CD8-positive, alpha-beta T cell (primary cell): ENCODE measurements at regions of chrX and their contacts with region 1.

Region 1: DNA sequence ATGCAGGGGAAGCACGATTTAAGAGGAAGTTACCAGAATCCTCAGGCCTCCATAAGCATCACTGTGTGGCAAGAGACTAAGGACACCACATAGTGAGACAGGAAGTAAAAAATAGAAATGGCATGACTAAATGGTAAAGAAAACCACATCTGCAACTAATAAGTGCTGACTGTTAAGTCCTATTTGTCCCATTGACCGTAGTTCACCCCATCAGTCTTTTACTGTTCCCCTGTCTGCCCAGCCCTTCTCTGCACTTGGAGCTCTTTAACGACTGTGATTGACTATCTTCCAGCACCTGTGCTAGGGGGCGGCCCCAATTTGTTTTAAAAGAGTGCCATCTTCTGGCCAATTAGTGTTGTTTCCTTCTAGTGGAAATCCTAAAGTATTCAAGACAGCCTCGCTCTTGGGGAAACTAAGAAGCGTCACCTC is 94.2 kb downstream of the MAOA start:
- DNase-seq: peak in 8 of 9 experiments; percentile 3 to 67 (median 43)
- ATAC-seq: peak; percentile 68
- H3K4me3 ChIP-seq: no peak overlapping the region
- H3K4me3 Mint-ChIP-seq: no peak overlapping the region
- H3K27ac ChIP-seq: no peak overlapping the region
- H3K27ac Mint-ChIP-seq: no peak overlapping the region
- H3K4me1 ChIP-seq: no peaks in the 10 kb centered on the region
- H3K4me1 Mint-ChIP-seq: peaks cover 4% of the 10 kb centered on the region
- H3K27me3 ChIP-seq: no peaks in the 10 kb centered on the region
- H3K27me3 Mint-ChIP-seq: no peaks in the 10 kb centered on the region
- CTCF ChIP-seq: peak; percentile 28

Region 2: DNA sequence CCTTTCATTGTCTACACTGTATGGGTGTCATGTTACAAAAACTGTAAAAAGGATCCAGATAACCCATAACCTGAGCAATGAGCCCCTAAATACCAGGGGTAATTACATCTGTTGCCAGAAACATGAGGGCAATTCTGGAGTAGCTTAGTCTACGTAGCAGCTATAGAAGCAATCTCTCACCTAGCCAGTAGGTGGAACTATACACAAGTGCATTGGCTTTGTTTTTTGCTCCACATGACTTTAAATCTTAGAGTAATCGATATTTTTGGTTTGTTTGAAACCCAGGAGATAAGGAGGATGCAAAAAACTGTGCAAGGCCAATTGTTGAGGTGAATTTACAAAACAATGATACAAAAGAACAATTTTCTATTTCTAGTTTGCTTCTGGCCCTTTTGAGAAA is 1968.8 kb before region 1 on chrX:
- CTCF ChIA-PET with region 1: interaction called, 3 read pairs
- POLR2A ChIA-PET with region 1: no interaction called
- intact Hi-C with region 1: loop called (anchors 1 to 2 kb)
- DNase-seq: peak in 3 of 9 experiments; percentile 6 to 63 (median 51)
- ATAC-seq: peak; percentile 54
- H3K4me3 ChIP-seq: no peak overlapping the region
- H3K4me3 Mint-ChIP-seq: no peak overlapping the region
- H3K27ac ChIP-seq: no peak overlapping the region
- H3K27ac Mint-ChIP-seq: no peak overlapping the region
- H3K4me1 ChIP-seq: no peaks in the 10 kb centered on the region
- H3K4me1 Mint-ChIP-seq: peaks cover 15% of the 10 kb centered on the region
- H3K27me3 ChIP-seq: no peaks in the 10 kb centered on the region
- H3K27me3 Mint-ChIP-seq: no peaks in the 10 kb centered on the region
- CTCF ChIP-seq: peak; percentile 68

Region 3: GRCh38 chrX:41796577-41796976 is 1953.7 kb before region 1 on chrX:
- CTCF ChIA-PET with region 1: interaction called, 4 read pairs
- POLR2A ChIA-PET with region 1: no interaction called
- intact Hi-C with region 1: loop called (anchors 2 to 5 kb)
- DNase-seq: peak in 2 of 9 experiments; percentile 8
- ATAC-seq: no peak
- H3K4me3 ChIP-seq: no peak overlapping the region
- H3K4me3 Mint-ChIP-seq: no peak overlapping the region
- H3K27ac ChIP-seq: no peak overlapping the region
- H3K27ac Mint-ChIP-seq: peak overlapping the region; percentile 56
- H3K4me1 ChIP-seq: peaks cover 13% of the 10 kb centered on the region
- H3K4me1 Mint-ChIP-seq: peaks cover 37% of the 10 kb centered on the region
- H3K27me3 ChIP-seq: no peaks in the 10 kb centered on the region
- H3K27me3 Mint-ChIP-seq: no peaks in the 10 kb centered on the region
- CTCF ChIP-seq: no peak

Region 4: DNA sequence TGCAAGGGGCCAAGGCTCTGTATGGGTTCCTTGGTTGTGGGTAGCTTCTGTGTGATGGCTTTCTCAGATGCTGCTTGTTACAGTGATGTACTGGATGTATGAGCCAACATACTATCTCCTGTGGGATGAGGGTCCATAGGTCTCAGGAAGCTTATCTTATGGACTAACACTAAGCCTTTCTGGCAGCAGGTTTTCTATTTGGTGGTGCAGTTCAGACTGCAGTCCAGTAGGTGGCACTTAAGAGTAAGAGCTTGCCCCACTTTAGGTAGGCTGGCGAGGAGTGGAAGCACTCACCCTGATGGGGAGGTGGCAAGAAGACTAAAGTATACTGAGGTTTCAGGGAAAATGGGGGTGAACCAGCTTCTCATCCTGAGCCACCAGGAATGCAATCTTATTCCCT is 400.9 kb before region 1 on chrX:
- CTCF ChIA-PET with region 1: interaction called, 6 read pairs
- POLR2A ChIA-PET with region 1: no interaction called
- intact Hi-C with region 1: loop called in 1 of 2 experiments (anchors 2 kb)
- DNase-seq: peak in 6 of 9 experiments; percentile 1 to 59 (median 30)
- ATAC-seq: peak; percentile 44
- H3K4me3 ChIP-seq: no peak overlapping the region
- H3K4me3 Mint-ChIP-seq: no peak overlapping the region
- H3K27ac ChIP-seq: no peak overlapping the region
- H3K27ac Mint-ChIP-seq: no peak overlapping the region
- H3K4me1 ChIP-seq: no peaks in the 10 kb centered on the region
- H3K4me1 Mint-ChIP-seq: peaks cover 8% of the 10 kb centered on the region
- H3K27me3 ChIP-seq: no peaks in the 10 kb centered on the region
- H3K27me3 Mint-ChIP-seq: no peaks in the 10 kb centered on the region
- CTCF ChIP-seq: peak; percentile 21

Region 5: DNA sequence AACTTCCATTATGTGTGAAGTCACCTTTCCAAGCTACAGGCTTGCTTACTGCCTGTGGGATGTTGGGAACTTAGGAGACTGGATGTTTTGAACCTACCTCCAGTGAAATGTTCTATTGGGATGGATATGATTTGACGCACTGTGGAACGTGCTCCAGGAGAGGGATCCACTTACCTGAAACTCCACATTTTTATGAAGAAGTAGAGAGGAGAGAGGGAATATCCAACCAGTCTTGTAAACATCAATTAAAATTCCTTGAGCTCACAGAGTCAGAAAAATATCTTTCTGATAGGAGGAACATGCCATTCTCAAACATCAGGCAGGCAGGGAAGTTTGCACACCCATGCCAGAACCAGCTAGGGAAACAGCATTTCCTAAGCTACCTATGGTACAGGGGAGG is 185.3 kb before region 1 on chrX:
- CTCF ChIA-PET with region 1: interaction called, 19 read pairs
- POLR2A ChIA-PET with region 1: no interaction called
- intact Hi-C with region 1: no loop called
- DNase-seq: no peak
- ATAC-seq: no peak
- H3K4me3 ChIP-seq: no peak overlapping the region
- H3K4me3 Mint-ChIP-seq: no peak overlapping the region
- H3K27ac ChIP-seq: no peak overlapping the region
- H3K27ac Mint-ChIP-seq: no peak overlapping the region
- H3K4me1 ChIP-seq: no peaks in the 10 kb centered on the region
- H3K4me1 Mint-ChIP-seq: no peaks in the 10 kb centered on the region
- H3K27me3 ChIP-seq: no peaks in the 10 kb centered on the region
- H3K27me3 Mint-ChIP-seq: no peaks in the 10 kb centered on the region
- CTCF ChIP-seq: no peak

Region 6: DNA sequence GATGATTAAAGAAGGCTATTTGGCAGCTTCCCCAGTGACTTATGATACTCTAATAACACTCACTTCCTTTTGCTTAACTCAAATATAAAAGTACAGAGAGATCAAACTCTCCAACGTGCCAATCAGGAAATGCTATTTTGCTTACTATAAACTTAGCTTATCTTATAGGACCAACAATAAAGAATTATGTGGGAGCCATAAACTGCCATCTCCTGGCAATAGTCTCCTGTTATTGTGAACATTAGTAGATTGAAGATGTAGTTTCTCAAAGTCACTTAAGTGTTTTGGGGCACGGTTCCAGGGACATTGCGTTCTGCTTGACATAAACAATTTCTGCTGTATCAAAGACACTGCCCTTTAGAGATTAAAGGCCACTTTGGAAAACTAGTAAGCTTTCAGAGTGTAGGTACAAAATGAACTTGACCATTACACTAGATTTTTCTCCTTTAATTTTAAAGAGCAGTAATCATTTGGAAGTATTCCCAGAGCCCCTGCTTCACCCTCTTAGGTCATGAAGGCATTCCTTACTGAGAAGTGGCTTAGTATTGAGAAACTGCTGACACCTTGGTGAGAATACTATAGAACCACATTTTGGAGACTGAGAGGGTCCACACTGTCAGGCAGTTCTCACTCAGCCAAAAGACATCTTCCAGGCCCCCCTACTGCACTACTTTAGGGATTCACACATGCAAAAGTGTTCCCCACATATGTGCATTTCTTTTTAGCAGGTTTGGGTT is 42.3 kb before region 1 on chrX:
- CTCF ChIA-PET with region 1: no interaction called
- POLR2A ChIA-PET with region 1: no interaction called
- intact Hi-C with region 1: no loop called
- DNase-seq: no peak
- ATAC-seq: no peak
- H3K4me3 ChIP-seq: no peak overlapping the region
- H3K4me3 Mint-ChIP-seq: no peak overlapping the region
- H3K27ac ChIP-seq: no peak overlapping the region
- H3K27ac Mint-ChIP-seq: no peak overlapping the region
- H3K4me1 ChIP-seq: no peaks in the 10 kb centered on the region
- H3K4me1 Mint-ChIP-seq: no peaks in the 10 kb centered on the region
- H3K27me3 ChIP-seq: no peaks in the 10 kb centered on the region
- H3K27me3 Mint-ChIP-seq: peaks cover 7% of the 10 kb centered on the region
- CTCF ChIP-seq: no peak

Region 7: GRCh38 chrX:43728002-43728401 is 22.3 kb before region 1 on chrX:
- CTCF ChIA-PET with region 1: no interaction called
- POLR2A ChIA-PET with region 1: no interaction called
- intact Hi-C with region 1: no loop called
- DNase-seq: no peak
- ATAC-seq: no peak
- H3K4me3 ChIP-seq: no peak overlapping the region
- H3K4me3 Mint-ChIP-seq: no peak overlapping the region
- H3K27ac ChIP-seq: no peak overlapping the region
- H3K27ac Mint-ChIP-seq: no peak overlapping the region
- H3K4me1 ChIP-seq: no peaks in the 10 kb centered on the region
- H3K4me1 Mint-ChIP-seq: no peaks in the 10 kb centered on the region
- H3K27me3 ChIP-seq: no peaks in the 10 kb centered on the region
- H3K27me3 Mint-ChIP-seq: no peaks in the 10 kb centered on the region
- CTCF ChIP-seq: no peak